Panc1 (cell line): ENCODE measurements at regions of chr15 and their contacts with region 1.

Region 1: DNA sequence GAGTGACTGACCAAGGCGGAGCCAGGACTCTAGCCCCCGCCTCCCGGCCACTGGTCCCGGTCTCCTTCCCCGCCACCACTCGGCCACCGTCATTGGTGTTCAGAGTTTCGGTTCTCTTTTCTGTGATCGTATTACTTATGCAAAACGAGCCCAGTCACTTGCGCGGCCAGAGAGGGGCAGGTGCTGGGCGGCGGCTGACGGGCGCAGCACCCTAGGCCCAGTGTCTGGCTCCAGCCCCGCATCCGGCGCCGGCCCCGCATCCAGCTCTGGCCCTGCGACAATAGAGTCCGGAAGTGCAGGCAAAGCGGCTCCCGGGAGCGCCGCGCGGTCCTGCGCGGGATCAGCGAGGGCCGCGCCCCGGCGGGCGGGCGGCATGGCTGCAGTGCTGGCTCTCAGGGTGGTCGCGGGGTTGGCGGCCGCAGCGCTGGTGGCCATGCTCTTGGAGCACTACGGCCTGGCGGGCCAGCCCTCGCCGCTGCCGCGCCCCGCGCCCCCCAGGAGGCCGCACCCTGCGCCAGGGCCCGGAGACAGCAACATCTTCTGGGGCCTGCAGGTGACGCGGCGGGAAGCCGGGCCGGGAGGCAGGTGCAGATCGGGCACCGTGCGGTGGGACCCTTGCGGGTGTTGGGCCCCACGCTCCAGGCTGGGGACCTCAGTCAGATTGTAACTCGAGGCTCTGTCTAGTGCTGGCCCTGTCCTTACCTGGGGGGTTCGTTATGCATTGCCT is at the start of gene TMEM62:
- DNase-seq: peak; percentile 45
- ATAC-seq: peak; percentile 97
- H3K4me3 ChIP-seq: peak within 1 kb of the TSS; percentile 70 to 83
- H3K27ac ChIP-seq: peak within 1 kb of the TSS; percentile 86
- H3K4me1 ChIP-seq: peaks cover 11% of the 10 kb centered on the region
- H3K27me3 ChIP-seq: no peaks in the 10 kb centered on the region
- CTCF ChIP-seq: no peak
- total RNA-seq, gene TMEM62: 20.4 TPM

Region 2: DNA sequence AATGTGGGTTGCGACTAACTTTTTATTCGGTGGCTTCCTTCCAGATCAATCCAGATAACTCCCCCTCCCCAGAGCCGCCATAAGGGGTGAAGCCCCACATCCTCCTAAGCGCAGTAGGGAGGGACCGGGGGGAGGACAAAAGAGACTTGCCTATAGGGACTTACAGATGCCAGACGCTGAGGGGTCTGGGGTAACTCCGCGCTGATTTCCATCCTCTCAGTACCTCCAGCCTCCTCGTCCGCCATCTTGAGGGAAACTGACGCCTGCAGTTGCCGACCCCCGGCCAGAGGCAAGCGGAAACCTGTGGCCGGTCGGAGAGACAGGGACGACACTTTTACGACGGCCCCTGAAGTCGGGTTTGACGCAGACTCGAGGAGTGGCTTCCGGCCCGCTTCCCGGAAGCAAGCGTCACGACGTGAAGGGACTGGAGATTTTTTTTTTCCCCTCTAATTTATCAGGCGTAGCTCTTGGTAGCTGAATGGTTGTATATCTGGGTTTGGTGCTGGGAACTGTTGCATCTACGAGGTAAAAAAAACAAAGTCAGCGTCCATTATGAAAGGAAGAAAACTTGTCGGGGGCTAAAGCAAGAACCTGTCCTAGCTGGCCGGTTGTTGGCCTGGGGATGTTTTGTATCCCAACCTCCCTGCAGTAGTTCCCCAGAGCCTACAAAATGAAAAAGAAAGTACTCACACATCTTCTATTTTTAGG is 27.7 kb before region 1 on chr15 and contains the start of gene UBR1:
- CTCF ChIA-PET with region 1: interaction called, 10 read pairs
- POLR2A ChIA-PET with region 1: no interaction called
- in situ Hi-C with region 1: no loop called
- intact Hi-C with region 1: no loop called
- DNase-seq: peak; percentile 63
- ATAC-seq: peak; percentile 98
- H3K4me3 ChIP-seq: peak within 1 kb of the TSS; percentile 85 to 88
- H3K27ac ChIP-seq: peak within 1 kb of the TSS; percentile 95
- H3K4me1 ChIP-seq: peaks cover 13% of the 10 kb centered on the region
- H3K27me3 ChIP-seq: no peaks in the 10 kb centered on the region
- CTCF ChIP-seq: no peak
- total RNA-seq, gene UBR1: 23.2 TPM

Region 3: DNA sequence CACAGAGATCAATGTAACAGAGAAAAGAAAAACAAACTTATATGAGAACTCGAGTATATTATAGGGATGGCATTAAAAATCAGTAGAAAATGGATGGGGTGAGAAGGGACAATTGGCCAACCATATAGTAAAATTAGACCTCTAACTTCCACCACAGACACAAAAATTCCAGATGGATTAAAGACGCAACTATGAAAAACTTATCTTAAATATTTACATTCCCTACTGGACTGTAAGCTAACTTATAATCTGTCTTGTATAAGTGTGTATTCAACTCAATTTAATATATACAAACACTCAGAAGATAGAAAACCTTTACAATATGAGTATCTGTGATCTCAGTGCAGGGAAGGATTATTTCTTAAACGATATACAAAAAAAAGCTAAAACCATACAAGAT is 687.9 kb after region 1 on chr15:
- CTCF ChIA-PET with region 1: no interaction called
- POLR2A ChIA-PET with region 1: no interaction called
- in situ Hi-C with region 1: no loop called
- intact Hi-C with region 1: no loop called
- DNase-seq: no peak
- ATAC-seq: no peak
- H3K4me3 ChIP-seq: no peak overlapping the region
- H3K27ac ChIP-seq: no peak overlapping the region
- H3K4me1 ChIP-seq: 0 out of 2 replicates have a peak, but pooled peaks cover 4% of the 10 kb centered on the region
- H3K27me3 ChIP-seq: no peaks in the 10 kb centered on the region
- CTCF ChIP-seq: no peak